BJ (cell line): ENCODE measurements at regions of chr17 and their contacts with region 1.

Region 1: DNA sequence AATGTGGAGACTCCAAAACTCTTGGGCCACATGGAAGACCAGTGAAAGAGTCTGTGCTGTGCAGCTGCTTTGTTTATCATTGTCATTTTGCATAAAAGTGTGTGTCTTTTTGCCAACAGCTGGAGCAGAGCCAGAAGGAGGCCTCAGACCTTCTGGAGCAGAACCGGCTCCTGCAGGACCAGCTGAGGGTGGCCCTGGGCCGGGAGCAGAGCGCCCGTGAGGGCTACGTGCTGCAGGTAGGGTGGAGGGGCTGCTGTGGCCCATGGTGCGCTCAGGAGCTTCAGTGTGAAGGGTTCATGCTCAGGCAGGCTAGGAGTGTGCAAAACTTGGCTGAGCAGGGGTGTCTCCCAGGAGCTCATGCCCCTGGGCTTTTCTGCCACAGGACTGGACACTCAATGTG is 45.0 kb downstream of the PLD6 start:
- DNase-seq: no peak
- H3K4me3 ChIP-seq: no peak overlapping the region
- H3K27me3 ChIP-seq: no peaks in the 10 kb centered on the region
- CTCF ChIP-seq: no peak

Region 2: DNA sequence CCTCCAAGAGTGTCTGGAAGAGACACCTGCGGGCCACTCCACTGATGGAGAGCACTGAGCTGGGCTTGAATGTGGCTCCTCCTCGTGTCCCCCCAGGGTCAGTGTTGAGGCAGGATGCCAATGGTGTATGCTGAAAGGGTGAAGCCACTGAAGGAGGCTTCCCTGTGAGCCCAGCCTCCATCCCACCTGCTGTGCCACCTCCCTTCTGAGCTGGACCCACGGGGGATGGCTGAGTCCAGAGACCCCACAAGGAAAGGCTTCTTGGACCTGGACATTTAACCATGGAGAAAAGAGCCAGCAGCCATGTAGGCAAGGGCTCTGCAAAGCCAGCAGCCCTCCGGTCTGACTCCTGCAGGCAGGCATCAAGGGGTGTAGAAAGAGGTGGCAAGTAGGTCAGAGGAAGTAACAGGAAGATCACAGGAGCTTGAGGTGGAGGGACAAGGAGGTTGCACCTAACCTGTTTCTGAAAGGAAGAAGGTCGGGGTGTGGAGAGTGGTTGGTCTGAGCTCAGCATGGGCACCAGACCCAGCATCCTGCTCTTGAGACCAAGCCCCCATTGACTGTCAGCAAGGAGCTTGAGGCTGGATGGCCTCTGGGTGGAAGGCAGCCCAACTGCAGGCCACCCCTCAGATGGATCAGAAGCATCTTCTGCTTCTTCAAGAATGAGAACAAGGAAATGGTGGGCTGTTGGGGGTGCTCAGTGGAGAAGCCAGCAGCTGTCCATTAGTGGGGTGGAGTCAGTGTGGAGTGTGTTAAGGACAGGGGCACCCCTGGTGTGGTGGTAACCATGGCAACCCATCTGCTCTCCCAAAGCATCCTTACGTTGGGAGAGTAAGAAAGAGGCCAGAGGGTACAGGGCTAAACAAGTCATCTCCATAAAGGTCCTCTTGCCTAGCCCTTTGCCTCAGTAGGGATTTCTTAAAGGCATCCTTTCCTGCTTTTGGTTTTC is 35.7 kb before region 1 on chr17:
- CTCF ChIA-PET with region 1: no interaction called
- POLR2A ChIA-PET with region 1: no interaction called
- DNase-seq: no peak
- H3K4me3 ChIP-seq: no peak overlapping the region
- H3K27me3 ChIP-seq: no peaks in the 10 kb centered on the region
- CTCF ChIP-seq: no peak

Region 3: GRCh38 chr17:17237026-17237799 is 76.1 kb after region 1 on chr17 and contains the start of gene FLCN:
- CTCF ChIA-PET with region 1: no interaction called
- POLR2A ChIA-PET with region 1: interaction called, 24 read pairs
- DNase-seq: no peak
- H3K4me3 ChIP-seq: peak within 1 kb of the TSS; percentile 90
- H3K27me3 ChIP-seq: no peaks in the 10 kb centered on the region
- CTCF ChIP-seq: no peak
- polyA plus RNA-seq, gene FLCN: 12.4 and 15.4 TPM in 2 replicates